Right lobe of liver (tissue), 6 donors: ENCODE measurements at regions of chr22 and their contacts with region 1.

Region 1: GRCh38 chr22:19779685-19780268 is 19.2 kb downstream of the TBX1 start:
- DNase-seq: no peak
- ATAC-seq: no peak
- H3K4me3 ChIP-seq: no peak overlapping the region
- H3K27ac ChIP-seq: no peak overlapping the region
- H3K4me1 ChIP-seq: no peaks in the 10 kb centered on the region
- H3K27me3 ChIP-seq: no peaks in the 10 kb centered on the region
- CTCF ChIP-seq: no peak
- POLR2A ChIP-seq: no peak

Region 2: GRCh38 chr22:19891317-19892256 is 111.8 kb after region 1 on chr22:
- intact Hi-C with region 1: loop called in 1 of 2 experiments (anchors 10 kb)
- DNase-seq: no peak
- ATAC-seq: peak in 3 of 4 donors; percentile 24 to 33 (median 26)
- H3K4me3 ChIP-seq: no peak overlapping the region
- H3K27ac ChIP-seq: no peak overlapping the region
- H3K4me1 ChIP-seq: peaks cover 0 to 6% (median 0%) of the 10 kb centered on the region in 4 donors
- H3K27me3 ChIP-seq: no peaks in the 10 kb centered on the region
- CTCF ChIP-seq: no peak
- POLR2A ChIP-seq: no peak

Region 3: DNA sequence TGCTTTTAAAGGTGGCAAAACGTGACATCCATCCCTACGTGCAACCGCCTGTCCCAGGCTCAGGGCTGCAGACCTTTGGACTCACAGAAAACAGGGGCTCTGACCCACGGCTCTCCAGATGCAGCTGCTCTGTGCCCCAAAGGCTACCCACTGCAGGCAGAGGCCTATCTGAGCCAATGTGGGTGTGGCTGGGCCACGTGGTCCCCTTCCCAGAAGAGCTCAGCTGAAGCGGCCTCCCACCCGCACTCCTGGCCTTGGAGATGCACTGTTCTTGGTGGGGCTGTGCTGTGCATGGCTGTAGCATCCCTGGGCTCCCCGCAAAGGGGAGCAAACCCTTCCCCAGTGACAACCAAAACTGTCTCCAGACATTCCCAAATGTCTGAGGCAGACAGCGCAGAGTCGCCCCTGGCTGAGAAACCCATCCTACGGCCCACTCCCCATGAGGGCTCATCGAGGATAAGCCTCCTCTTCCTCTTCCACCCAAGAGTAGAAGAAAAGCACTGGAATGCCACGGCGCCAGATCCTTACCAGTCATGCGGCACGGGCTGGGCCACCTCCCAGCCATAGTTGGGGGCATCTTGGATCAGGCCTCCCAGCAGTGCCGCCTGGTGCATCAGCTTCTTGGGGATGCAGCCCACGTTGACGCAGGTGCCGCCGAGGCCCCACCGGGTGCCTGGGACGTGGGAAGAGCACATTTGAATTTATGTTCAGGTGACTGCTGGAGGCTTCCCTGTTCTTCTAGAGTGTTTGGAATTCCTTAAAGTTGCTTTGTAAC is 138.7 kb after region 1 on chr22:
- intact Hi-C with region 1: no loop called
- DNase-seq: no peak
- ATAC-seq: no peak
- H3K4me3 ChIP-seq: no peak overlapping the region
- H3K27ac ChIP-seq: no peak overlapping the region
- H3K4me1 ChIP-seq: peaks cover 0 to 3% (median 0%) of the 10 kb centered on the region in 4 donors
- H3K27me3 ChIP-seq: no peaks in the 10 kb centered on the region
- CTCF ChIP-seq: no peak
- POLR2A ChIP-seq: no peak